ENCODE measurements at regions of chr17 and their contacts with region 1.

Region 1: GRCh38 chr17:8997994-8998628 is 23.2 kb upstream of the NTN1 start:
- DNase-seq: peak; percentile 75 to 80 (median 77)
- H3K4me3 ChIP-seq: no peak overlapping the region
- H3K4me3 Mint-ChIP-seq: no peak overlapping the region
- H3K27ac ChIP-seq: no peak overlapping the region
- H3K27ac Mint-ChIP-seq: peak overlapping the region in 1 of 7 donors; percentile 32
- H3K4me1 ChIP-seq: peaks cover 5% of the 10 kb centered on the region
- H3K4me1 Mint-ChIP-seq: peaks cover 8 to 16% (median 12%) of the 10 kb centered on the region in 4 donors
- H3K27me3 ChIP-seq: no peaks in the 10 kb centered on the region
- H3K27me3 Mint-ChIP-seq: peaks cover 22 to 26% of the 10 kb centered on the region in 2 donors

Region 2: DNA sequence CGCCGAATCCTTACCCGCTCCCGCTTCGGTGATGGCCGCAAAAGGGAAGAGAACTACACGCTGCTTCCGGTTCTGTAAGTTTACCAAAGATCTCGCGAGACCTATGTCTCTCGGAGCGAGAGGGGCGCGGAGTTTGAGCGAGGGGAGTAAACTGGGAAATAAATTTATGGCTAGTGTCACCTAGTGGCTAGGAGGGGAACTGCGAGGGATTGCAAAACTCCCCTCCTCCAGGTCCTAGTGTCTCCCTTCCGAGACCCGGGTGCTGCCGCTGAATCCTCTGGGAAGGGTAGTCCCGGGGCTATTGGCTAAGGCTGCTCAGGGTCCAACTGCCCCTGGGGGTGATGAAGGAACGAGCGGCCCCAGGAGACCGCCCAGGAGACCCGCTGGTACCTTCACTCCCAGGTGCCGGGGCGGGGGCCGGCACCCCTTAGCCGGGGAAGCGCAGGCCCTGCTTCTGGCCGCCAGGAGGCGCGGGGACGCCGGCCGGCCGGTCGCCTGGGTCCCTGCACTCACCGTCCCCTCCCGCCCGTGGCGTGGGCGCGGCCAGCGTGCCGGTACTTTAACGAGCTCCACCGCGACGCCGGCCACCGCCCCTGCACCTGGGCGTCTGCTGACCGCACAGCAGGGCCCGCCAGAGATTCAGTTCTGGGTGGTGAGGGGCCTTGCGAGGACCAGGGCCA is 614.8 kb before region 1 on chr17 and contains the start of gene RPL26:
- CTCF ChIA-PET with region 1: no interaction called
- POLR2A ChIA-PET with region 1: no interaction called
- intact Hi-C with region 1: loop called (anchors 1 kb)
- DNase-seq: peak; percentile 96 to 98 (median 97)
- H3K4me3 ChIP-seq: peak within 1 kb of the TSS; percentile 74 to 95
- H3K4me3 Mint-ChIP-seq: peak within 1 kb of the TSS; percentile 95 to 99 (median 97)
- H3K27ac ChIP-seq: peak within 1 kb of the TSS; percentile 77
- H3K27ac Mint-ChIP-seq: peak within 1 kb of the TSS; percentile 94 to 97 (median 96)
- H3K4me1 ChIP-seq: peaks cover 49% of the 10 kb centered on the region
- H3K4me1 Mint-ChIP-seq: peaks cover 36 to 82% (median 54%) of the 10 kb centered on the region in 4 donors
- H3K27me3 ChIP-seq: no peaks in the 10 kb centered on the region
- H3K27me3 Mint-ChIP-seq: no peaks in the 10 kb centered on the region
- total RNA-seq, gene RPL26: 2,761 to 2,878 TPM

Region 3: DNA sequence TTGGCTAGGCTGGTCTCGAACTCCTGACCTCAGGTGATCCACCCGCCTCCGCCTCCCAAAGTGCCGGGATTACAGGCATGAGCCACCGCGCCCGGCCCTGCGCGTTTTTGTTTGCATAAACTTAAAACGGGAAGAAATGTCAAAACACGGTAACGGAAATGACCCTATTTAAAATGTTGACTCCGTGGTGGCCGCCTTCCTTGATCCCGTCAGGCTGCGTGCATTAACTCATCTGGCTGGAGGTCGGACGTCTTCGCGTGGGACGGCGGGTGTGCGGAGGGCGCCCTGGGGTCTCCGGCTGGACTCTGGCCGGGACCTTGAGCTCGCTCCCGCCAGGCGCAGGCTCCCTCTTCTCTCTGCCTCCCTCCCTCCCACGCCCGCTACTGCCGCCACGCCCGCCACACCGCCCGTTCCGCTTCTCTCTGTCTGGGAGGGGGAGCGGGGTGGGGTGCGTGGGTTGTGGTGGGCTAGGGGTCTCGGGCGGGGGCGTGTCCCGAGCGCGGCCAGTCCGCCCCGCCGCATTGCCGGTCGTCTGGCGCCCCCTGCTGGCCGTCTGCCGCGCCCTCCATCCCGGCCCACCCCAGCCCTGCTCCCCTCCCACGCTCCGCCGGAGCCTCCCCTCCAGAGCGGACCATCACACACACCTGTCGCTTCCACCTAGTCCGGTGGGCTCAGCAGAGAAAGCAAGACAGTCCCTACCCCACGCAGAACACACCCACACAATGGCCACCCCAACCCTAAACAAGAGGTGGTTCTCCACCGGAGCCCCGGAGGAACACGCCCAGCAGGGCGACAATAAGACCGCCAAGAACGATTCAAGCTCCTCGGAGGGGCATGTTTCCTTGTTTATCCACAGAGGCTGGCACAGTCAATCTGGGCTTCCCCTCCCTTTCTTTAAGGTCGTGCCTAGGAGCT is 252.3 kb before region 1 on chr17:
- CTCF ChIA-PET with region 1: interaction called, 5 read pairs
- POLR2A ChIA-PET with region 1: no interaction called
- intact Hi-C with region 1: loop called (anchors 1 kb)
- DNase-seq: peak; percentile 66 to 78 (median 70)
- H3K4me3 ChIP-seq: peak overlapping the region; percentile 34 to 72
- H3K4me3 Mint-ChIP-seq: peak overlapping the region; percentile 89 to 95 (median 91)
- H3K27ac ChIP-seq: peak overlapping the region; percentile 56
- H3K27ac Mint-ChIP-seq: peak overlapping the region; percentile 87 to 95 (median 91)
- H3K4me1 ChIP-seq: peaks cover 17% of the 10 kb centered on the region
- H3K4me1 Mint-ChIP-seq: peaks cover 9 to 23% (median 12%) of the 10 kb centered on the region in 4 donors
- H3K27me3 ChIP-seq: no peaks in the 10 kb centered on the region
- H3K27me3 Mint-ChIP-seq: no peaks in the 10 kb centered on the region

Region 4: DNA sequence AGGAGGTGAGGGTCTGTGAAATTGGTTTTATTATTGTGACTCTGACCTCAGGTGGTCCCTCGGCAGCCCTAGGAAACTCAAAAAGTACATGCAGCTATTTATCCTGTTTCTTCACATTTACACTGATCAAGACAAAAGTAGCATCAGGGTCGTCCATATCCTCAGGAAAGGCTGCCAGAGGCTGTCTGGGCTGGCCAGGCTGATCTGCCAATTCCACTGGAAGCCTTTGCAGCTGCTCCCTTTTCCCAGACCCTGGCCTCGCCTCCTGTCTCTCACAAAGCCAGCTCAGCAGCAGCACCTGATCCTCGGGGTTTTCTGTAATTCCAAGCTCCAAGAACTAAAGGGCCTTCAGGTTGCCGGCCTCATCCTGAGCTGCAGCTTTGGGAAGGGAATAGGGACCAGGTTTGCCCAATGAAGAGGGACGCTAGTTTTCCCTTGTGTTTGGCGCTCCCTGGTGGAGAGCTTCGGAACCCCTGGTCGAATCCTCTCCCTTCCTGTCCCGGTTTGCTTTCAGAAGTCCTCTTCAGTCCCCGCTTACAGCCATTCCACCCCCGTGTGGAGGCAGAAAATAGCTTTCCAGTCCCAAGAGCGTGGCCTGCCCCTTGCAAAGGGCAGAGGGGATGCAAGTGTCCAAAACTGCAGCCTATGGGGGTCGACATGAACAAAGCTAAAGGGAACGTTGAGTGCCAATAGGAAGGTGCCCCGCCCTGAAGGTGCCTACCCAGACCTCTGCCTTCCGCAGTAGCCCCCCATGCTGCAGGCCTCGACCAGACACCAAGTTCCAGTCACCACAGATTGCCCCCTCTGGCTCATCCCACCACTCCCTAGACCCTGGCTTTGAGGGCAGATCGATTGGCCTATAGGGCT is 212.3 kb before region 1 on chr17:
- CTCF ChIA-PET with region 1: interaction called, 15 read pairs
- POLR2A ChIA-PET with region 1: no interaction called
- intact Hi-C with region 1: loop called (anchors 2 kb)
- DNase-seq: peak; percentile 31 to 50 (median 39)
- H3K4me3 ChIP-seq: no peak overlapping the region
- H3K4me3 Mint-ChIP-seq: no peak overlapping the region
- H3K27ac ChIP-seq: no peak overlapping the region
- H3K27ac Mint-ChIP-seq: peak overlapping the region in 1 of 7 donors; percentile 15
- H3K4me1 ChIP-seq: peaks cover 5% of the 10 kb centered on the region
- H3K4me1 Mint-ChIP-seq: peaks cover 1 to 4% (median 3%) of the 10 kb centered on the region in 4 donors
- H3K27me3 ChIP-seq: no peaks in the 10 kb centered on the region
- H3K27me3 Mint-ChIP-seq: peaks cover 2 to 3% of the 10 kb centered on the region in 2 donors

Region 5: DNA sequence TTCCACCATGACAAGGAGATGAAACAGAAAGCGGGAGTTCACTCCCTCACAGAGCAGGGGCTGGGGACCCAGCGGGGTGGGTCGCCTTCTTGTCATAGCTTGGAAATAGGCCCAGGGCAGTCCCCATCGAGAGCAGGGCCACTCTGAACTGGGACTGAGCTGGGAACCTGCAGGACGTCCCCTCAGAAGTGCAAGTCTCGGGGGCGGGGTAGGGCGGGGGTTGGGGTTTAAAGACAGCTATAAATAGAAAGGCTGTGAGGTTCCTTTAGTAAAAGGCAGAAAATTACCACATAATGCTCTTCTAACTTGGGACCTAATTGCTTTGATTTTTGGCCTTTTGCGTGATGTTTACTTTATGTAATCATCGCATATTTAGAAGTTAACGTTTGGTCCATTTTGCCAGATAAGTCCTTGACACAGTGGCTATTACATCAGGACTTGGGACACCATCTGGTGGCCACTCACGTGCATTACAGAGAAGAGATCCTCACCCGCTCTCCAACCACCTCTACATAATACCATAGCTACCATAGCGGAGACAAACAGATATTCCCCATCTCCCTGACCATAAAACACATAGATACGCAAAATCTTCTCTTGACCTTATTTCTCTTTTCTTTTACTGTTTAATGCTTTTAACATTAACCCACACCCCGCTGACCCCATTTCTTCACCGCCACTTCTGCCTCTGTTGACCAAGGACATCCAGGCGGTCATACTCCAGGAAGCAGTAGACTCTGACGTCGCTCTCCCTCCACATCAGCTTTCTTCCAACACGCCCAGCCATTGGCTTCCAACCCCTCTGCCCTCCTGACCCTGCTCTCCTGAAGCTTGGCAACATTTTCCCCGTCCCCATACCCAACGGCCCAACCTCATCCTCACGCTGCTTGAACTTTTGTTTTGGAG is 103.2 kb before region 1 on chr17:
- CTCF ChIA-PET with region 1: interaction called, 39 read pairs
- POLR2A ChIA-PET with region 1: interaction called, 3 read pairs
- intact Hi-C with region 1: loop called (anchors 2 kb)
- DNase-seq: peak in 4 of 5 donors; percentile 45 to 46 (median 46)
- H3K4me3 ChIP-seq: no peak overlapping the region
- H3K4me3 Mint-ChIP-seq: peak overlapping the region in 7 of 8 donors; percentile 12 to 44 (median 33)
- H3K27ac ChIP-seq: no peak overlapping the region
- H3K27ac Mint-ChIP-seq: peak overlapping the region; percentile 56 to 98 (median 92)
- H3K4me1 ChIP-seq: peaks cover 61% of the 10 kb centered on the region
- H3K4me1 Mint-ChIP-seq: peaks cover 51 to 68% (median 58%) of the 10 kb centered on the region in 4 donors
- H3K27me3 ChIP-seq: no peaks in the 10 kb centered on the region
- H3K27me3 Mint-ChIP-seq: no peaks in the 10 kb centered on the region

Region 6: GRCh38 chr17:8954339-8954738 is 43.8 kb before region 1 on chr17:
- CTCF ChIA-PET with region 1: interaction called, 18 read pairs
- POLR2A ChIA-PET with region 1: interaction called, 3 read pairs
- intact Hi-C with region 1: loop called (anchors 10 kb)
- DNase-seq: peak; percentile 80 to 96 (median 81)
- H3K4me3 ChIP-seq: peak overlapping the region in 1 of 2 donors; percentile 27
- H3K4me3 Mint-ChIP-seq: peak overlapping the region; percentile 76 to 91 (median 88)
- H3K27ac ChIP-seq: peak overlapping the region; percentile 65
- H3K27ac Mint-ChIP-seq: peak overlapping the region; percentile 92 to 100 (median 98)
- H3K4me1 ChIP-seq: peaks cover 95% of the 10 kb centered on the region
- H3K4me1 Mint-ChIP-seq: peaks cover 77 to 98% (median 92%) of the 10 kb centered on the region in 4 donors
- H3K27me3 ChIP-seq: no peaks in the 10 kb centered on the region
- H3K27me3 Mint-ChIP-seq: no peaks in the 10 kb centered on the region

Region 7: GRCh38 chr17:8986290-8986689 is 11.8 kb before region 1 on chr17:
- CTCF ChIA-PET with region 1: interaction called, 18 read pairs
- POLR2A ChIA-PET with region 1: no interaction called
- intact Hi-C with region 1: no loop called
- DNase-seq: no peak
- H3K4me3 ChIP-seq: no peak overlapping the region
- H3K4me3 Mint-ChIP-seq: peak overlapping the region in 2 of 8 donors; percentile 33 to 55
- H3K27ac ChIP-seq: no peak overlapping the region
- H3K27ac Mint-ChIP-seq: peak overlapping the region in 1 of 7 donors; percentile 29
- H3K4me1 ChIP-seq: peaks cover 13% of the 10 kb centered on the region
- H3K4me1 Mint-ChIP-seq: peaks cover 12 to 17% (median 13%) of the 10 kb centered on the region in 4 donors
- H3K27me3 ChIP-seq: no peaks in the 10 kb centered on the region
- H3K27me3 Mint-ChIP-seq: peaks cover 0 to 4% of the 10 kb centered on the region in 2 donors

Region 8: DNA sequence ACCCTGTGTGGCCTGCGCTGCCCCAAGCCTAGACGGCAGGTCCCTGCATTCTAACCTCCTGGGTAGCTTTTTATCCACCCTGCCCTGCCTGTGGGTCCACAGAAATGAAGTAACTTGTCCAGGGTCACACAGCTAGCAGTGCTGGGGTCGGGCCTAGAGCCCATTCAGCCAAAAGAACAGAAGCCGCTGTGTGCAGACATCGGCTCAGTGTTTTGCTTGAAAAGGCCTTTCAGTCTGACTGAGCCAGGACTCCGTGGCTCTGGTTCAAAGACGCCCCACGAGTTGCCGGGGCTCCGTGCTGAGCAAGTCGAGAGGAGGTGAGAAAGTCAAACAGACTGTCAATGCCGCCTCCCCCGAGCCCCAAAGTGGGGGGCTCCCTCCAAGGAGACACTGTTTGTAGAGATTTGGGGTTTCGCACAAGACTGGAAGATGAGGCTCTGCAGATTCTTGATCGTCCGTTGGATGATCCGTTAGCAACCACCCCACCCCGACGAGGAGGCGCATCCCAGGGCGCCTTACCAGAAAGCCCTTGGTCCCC is 249.4 kb after region 1 on chr17:
- CTCF ChIA-PET with region 1: no interaction called
- POLR2A ChIA-PET with region 1: no interaction called
- intact Hi-C with region 1: no loop called
- DNase-seq: no peak
- H3K4me3 ChIP-seq: no peak overlapping the region
- H3K4me3 Mint-ChIP-seq: no peak overlapping the region
- H3K27ac ChIP-seq: no peak overlapping the region
- H3K27ac Mint-ChIP-seq: peak overlapping the region in 1 of 7 donors; percentile 29
- H3K4me1 ChIP-seq: no peaks in the 10 kb centered on the region
- H3K4me1 Mint-ChIP-seq: peaks cover under 1 to 8% (median 1%) of the 10 kb centered on the region in 4 donors
- H3K27me3 ChIP-seq: no peaks in the 10 kb centered on the region
- H3K27me3 Mint-ChIP-seq: no peaks in the 10 kb centered on the region